Colonic mucosa (tissue), 4 donors: ENCODE measurements at regions of chr6 and their contacts with region 1.

Region 1: DNA sequence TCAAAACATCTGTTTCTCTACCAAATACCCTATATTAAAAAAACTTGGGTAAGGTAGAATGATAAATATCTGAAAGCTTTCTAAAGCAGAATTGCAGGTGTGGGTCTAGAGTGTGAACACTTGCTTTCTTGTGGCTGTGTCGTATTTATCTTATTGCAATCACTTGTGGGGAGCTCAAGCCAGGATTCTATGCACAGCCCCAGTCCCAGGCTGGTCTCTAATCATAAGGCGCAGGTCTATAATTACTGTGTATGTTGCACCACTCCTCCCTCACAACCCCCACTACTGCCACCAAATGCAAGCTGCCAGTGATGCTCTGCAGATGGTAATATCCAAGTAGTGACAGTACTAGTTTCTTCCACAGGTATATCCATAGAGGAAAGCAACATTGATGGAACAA is 2.2 kb upstream of the E2F3 start:
- DNase-seq: no peak
- H3K4me3 ChIP-seq: no peak overlapping the region
- H3K27ac ChIP-seq: no peak overlapping the region
- H3K4me1 ChIP-seq: no peaks in the 10 kb centered on the region
- H3K27me3 ChIP-seq: no peaks in the 10 kb centered on the region
- CTCF ChIP-seq: no peak

Region 2: GRCh38 chr6:20092071-20092566 is 307.4 kb before region 1 on chr6:
- intact Hi-C with region 1: loop called (anchors 10 kb)
- DNase-seq: no peak
- H3K4me3 ChIP-seq: no peak overlapping the region
- H3K27ac ChIP-seq: no peak overlapping the region
- H3K4me1 ChIP-seq: no peaks in the 10 kb centered on the region
- H3K27me3 ChIP-seq: no peaks in the 10 kb centered on the region
- CTCF ChIP-seq: peak; percentile 67

Region 3: DNA sequence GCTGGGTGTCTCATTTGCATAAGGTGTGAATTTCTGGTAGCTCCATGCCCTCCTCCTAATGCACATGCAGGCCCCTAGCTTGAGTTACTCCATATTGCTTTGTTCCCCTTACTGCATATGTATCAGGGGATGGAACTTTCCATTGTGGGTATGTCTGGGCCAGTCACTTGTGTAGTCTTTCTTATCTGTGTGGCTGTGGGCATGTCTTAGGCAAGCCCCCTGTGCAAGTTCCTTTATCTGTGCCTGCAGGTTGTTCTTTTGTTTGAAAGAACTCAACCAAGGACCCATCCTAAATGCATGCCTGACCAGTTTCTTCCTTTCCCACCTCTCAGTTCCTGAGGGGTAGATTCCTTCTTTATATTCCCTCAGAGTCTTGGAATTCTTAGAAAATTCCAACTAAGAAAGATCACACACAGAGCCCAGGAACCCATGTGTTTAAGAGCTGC is 210.9 kb before region 1 on chr6:
- intact Hi-C with region 1: no loop called
- DNase-seq: no peak
- H3K4me3 ChIP-seq: no peak overlapping the region
- H3K27ac ChIP-seq: no peak overlapping the region
- H3K4me1 ChIP-seq: no peaks in the 10 kb centered on the region
- H3K27me3 ChIP-seq: no peaks in the 10 kb centered on the region
- CTCF ChIP-seq: no peak